ENCODE measurements at regions of chr10 and their contacts with region 1.

Region 1: DNA sequence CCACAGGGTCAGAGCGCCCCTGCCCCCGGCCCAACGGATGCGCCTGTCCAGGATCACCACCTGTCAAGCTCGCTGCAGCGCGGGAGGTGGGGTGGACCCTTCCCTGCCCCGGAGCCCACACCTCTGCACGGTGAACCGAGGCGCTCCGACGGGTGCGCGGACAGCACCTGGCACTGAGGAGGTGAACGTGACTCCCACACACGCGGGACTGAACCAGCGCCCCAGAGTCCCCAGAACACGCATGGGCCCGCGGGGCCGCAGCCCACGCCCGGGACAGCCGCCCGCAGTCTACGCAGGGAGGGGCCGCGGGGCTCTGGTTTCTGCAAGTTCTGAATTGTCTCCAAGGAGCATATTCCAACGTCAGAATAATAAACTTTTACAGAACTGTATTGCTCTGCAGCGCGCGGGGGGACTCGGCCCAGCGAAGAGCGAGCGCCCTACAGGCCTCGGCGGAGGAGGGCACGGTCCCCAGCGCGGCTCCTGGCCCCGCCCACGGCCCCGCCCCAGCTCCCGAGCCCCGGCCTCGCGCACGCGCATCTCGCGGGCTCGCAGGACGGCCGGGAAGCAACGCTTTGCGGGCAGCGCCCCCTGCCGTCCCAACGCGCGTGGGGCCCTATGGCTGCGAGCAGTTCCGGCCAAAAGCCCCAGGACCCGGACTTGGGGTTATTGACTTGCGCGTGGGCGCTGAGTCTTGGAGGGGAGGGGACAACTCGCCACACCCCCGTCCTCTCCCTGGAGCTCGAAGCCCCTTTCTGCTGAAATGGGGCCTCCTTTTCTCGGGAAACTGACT is 29.7 kb downstream of the OAT start:
- DNase-seq: peak; percentile 72
- ATAC-seq: peak; percentile 96
- H3K4me3 ChIP-seq: peak overlapping the region; percentile 22 to 29; a peak in 3 of 4 replicates
- H3K27ac ChIP-seq: peak overlapping the region; percentile 15; the same call in 1 of the 2 replicates
- H3K4me1 ChIP-seq: peaks cover 7 to 10% of the 10 kb centered on the region in 2 experiments
- H3K27me3 ChIP-seq: no peaks in the 10 kb centered on the region
- CTCF ChIP-seq: peak; percentile 96 to 98 (median 96)
- POLR2A ChIP-seq: peak; percentile 65
- RAD21 ChIP-seq: peak; percentile 100

Region 2: DNA sequence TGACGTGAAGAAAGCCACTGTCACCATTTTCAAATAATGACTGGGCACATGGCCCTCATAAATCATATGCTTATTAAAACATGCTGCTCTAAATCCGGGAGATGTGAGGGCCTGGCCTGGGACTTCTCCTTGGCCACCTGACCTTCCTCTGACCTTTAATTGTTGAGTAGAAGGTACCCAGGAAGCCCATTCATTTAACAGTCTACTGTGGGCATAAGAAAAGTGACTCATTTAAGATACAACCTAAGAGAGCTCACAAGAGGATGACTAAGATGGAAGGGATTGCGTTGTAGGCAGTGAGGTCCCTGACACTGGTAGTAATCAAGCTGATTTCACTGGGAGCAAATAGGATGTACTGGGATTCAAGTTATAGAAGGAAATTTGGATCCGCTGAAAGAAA is 926.3 kb before region 1 on chr10:
- CTCF ChIA-PET with region 1: no interaction called
- POLR2A ChIA-PET with region 1: no interaction called
- RAD21 ChIA-PET with region 1: no interaction called
- intact Hi-C with region 1: no loop called
- DNase-seq: no peak
- ATAC-seq: no peak
- H3K4me3 ChIP-seq: no peak overlapping the region
- H3K27ac ChIP-seq: no peak overlapping the region
- H3K4me1 ChIP-seq: no peaks in the 10 kb centered on the region
- H3K27me3 ChIP-seq: no peaks in the 10 kb centered on the region
- CTCF ChIP-seq: no peak
- POLR2A ChIP-seq: no peak
- RAD21 ChIP-seq: no peak

Region 3: DNA sequence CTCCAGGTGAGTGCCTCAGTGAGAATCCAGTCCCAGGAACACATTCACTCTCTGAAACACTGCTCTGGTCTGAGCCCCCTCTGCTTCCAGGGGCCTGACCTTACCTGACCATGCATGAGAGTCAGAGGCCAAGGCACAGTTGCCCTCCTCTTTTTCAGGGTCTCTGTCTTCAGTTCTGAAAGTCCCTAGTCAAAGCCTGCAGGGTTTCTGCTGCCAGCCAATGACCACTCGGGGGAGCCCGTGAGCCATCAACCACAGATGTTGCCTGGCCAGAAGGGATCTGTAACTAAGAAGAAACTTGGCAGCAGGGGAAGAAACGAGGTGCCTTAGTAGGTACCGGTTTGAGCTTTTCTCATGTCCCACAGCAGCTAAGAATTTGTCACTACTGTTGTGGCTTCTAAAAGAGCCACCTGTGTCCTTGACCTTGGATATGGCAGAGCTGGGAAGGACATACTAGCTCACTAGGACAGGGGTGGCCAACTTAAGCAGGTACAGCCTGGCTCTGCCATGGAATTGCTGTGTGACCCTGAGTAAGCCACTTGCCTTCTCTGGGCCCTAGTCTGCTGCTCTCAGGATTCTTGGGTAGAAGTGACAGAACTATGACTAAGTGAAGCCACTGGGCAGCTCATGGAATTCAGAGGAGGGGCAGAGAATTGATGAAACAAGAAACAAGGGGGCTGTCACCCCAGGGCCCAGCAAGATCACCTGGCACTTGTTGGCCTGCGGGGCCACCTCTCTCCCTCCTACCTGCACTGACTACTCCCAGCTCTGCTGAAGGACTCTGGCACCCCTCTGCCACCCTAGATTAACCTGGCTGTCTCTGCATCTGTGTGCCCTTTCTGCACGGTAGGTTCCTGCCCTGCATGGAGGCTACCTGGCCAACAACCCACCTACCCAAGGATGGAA is 806.7 kb before region 1 on chr10:
- CTCF ChIA-PET with region 1: interaction called, 4 read pairs
- POLR2A ChIA-PET with region 1: no interaction called
- RAD21 ChIA-PET with region 1: no interaction called
- intact Hi-C with region 1: loop called (anchors 2 kb)
- DNase-seq: peak; percentile 68
- ATAC-seq: peak; percentile 86
- H3K4me3 ChIP-seq: no peak overlapping the region
- H3K27ac ChIP-seq: no peak overlapping the region
- H3K4me1 ChIP-seq: peaks cover 0 to 3% of the 10 kb centered on the region in 2 experiments; a peak in 2 of 4 replicates
- H3K27me3 ChIP-seq: peaks cover 51% of the 10 kb centered on the region
- CTCF ChIP-seq: peak; percentile 94 to 99 (median 99)
- POLR2A ChIP-seq: no peak
- RAD21 ChIP-seq: peak; percentile 96

Region 4: DNA sequence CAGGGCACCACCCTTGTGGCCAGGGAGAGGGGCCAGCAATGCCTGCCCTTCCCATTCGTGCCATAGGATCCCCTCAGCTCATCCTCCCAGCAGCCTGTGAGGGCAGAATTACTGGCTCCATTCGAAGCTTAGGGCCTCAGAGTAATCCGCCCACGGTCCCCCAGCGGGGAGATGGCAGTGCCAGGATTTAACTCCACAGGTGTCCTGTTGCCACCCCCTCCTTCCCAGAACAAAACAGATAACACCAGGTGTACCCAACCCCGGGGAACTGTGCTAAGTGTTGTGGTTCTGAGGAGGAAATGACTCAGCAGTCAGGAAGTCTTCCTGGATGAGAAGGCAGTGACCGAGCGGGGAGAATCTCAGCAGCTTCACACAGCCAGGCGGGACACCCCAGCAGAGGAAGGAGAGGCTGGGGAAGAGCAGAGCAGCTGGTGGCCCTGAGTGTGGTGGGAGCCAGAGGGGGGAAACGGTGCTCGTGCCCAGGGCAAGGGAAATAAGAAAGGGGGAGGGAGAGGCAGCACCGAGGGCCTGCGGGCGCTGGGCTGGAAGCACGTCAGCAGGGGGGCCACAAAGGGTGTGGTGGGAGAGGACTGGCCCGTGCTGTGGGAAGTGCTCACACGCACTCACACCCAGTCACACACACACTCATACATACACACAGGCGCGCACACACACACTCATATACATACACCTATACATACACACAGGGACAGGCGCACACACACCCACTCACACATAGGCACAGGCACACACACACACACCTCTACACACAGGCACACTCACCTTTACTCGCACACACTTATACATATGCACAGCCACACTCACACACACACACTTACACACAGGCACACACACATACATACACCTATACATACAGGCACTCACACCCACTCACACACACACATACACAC is 235.8 kb before region 1 on chr10:
- CTCF ChIA-PET with region 1: interaction called, 9 read pairs
- POLR2A ChIA-PET with region 1: interaction called, 3 read pairs
- RAD21 ChIA-PET with region 1: interaction called in 1 of 2 experiments, 5 read pairs
- intact Hi-C with region 1: loop called (anchors 5 kb)
- DNase-seq: peak; percentile 100
- ATAC-seq: peak; percentile 80
- H3K4me3 ChIP-seq: peak overlapping the region; percentile 45 to 57
- H3K27ac ChIP-seq: peak overlapping the region; percentile 94
- H3K4me1 ChIP-seq: peaks cover 50 to 66% of the 10 kb centered on the region in 2 experiments
- H3K27me3 ChIP-seq: no peaks in the 10 kb centered on the region
- CTCF ChIP-seq: no peak
- POLR2A ChIP-seq: no peak
- RAD21 ChIP-seq: no peak

Region 5: DNA sequence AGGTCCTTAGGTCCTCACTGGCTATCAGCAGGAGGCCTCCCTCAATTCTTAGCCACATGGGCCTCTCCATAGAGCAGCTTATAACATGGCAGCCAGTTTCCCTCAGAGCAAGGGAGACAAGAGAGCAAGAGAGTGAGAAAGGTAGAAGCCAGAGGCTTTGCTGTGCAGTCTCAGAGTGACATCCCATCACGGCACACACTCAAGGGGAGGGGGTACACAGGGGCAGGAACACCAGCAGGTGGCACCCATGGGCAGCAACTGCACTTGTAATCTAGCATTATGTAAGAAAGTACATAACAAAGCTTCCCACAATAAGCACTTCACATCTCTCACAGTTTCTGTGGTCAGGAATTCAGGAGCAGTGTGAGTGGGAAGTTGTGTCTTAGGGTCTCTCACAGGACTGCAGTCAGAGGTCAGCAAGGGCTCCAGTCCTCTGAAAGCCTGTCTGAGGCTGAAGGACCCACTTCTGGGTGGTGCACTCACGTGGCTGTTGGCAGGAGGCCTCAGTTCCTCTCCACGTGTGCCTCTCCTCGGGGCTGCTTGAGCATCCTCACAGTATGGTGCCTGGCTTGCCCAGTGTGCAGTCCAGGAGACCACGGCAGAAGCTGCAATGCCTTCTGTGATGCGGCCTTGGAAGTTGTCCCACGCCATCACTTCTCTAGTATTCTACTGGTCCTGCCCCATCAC is 129.7 kb before region 1 on chr10:
- CTCF ChIA-PET with region 1: interaction called, 13 read pairs
- POLR2A ChIA-PET with region 1: no interaction called
- RAD21 ChIA-PET with region 1: interaction called, 3 to 4 read pairs
- intact Hi-C with region 1: loop called (anchors 5 kb)
- DNase-seq: peak; percentile 21
- ATAC-seq: peak; percentile 84
- H3K4me3 ChIP-seq: no peak overlapping the region
- H3K27ac ChIP-seq: no peak overlapping the region
- H3K4me1 ChIP-seq: no peaks in the 10 kb centered on the region
- H3K27me3 ChIP-seq: no peaks in the 10 kb centered on the region
- CTCF ChIP-seq: peak; percentile 39 to 59 (median 40); a peak in 5 of 6 replicates
- POLR2A ChIP-seq: no peak
- RAD21 ChIP-seq: peak; percentile 64

Region 6: DNA sequence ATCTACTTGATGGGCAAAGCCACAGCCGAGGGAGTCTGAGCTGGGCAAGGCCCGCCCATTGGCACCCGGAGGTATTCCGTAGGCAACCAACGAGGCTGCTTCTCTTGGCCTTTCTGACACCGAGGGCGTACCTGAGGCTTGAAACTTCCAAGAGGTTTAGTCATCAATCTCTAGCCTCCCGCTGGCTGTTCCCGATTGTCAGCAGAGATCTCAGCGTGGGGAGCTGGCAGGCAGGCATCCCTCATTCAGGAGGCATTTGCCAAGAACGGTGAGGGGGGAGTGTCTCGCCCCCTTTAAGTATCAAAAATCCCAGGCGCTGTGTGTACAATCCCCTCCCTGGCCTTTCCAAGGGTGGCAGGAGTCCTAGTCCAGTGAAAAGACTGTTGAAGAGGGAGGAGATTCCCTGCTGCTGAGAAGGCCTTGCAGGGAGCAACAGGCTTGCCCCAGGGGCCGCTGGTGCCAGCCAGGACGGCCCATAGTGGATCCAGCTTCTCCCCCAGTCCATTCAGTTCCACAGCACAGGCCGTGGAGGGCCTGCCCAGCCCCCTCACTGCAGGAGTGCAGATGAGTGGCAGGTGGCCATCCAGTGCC is 10.0 kb before region 1 on chr10:
- CTCF ChIA-PET with region 1: interaction called, 29 read pairs
- POLR2A ChIA-PET with region 1: interaction called, 3 read pairs
- RAD21 ChIA-PET with region 1: interaction called in 1 of 2 experiments, 7 read pairs
- intact Hi-C with region 1: no loop called
- DNase-seq: peak; percentile 78
- ATAC-seq: peak; percentile 98
- H3K4me3 ChIP-seq: peak overlapping the region; percentile 10 to 36; a peak in 2 of 4 replicates
- H3K27ac ChIP-seq: 0 out of 2 replicates have a peak overlapping the region, but pooled peaks have one; percentile 0
- H3K4me1 ChIP-seq: peaks cover 12 to 18% of the 10 kb centered on the region in 2 experiments
- H3K27me3 ChIP-seq: no peaks in the 10 kb centered on the region
- CTCF ChIP-seq: no peak
- POLR2A ChIP-seq: no peak
- RAD21 ChIP-seq: no peak; the same call in 1 of the 2 replicates

Region 7: GRCh38 chr10:124894569-124895215 is 505.7 kb after region 1 on chr10:
- CTCF ChIA-PET with region 1: no interaction called
- POLR2A ChIA-PET with region 1: no interaction called
- RAD21 ChIA-PET with region 1: no interaction called
- intact Hi-C with region 1: no loop called
- DNase-seq: no peak
- ATAC-seq: no peak
- H3K4me3 ChIP-seq: no peak overlapping the region
- H3K27ac ChIP-seq: no peak overlapping the region
- H3K4me1 ChIP-seq: no peaks in the 10 kb centered on the region; a peak in 1 of 4 replicates
- H3K27me3 ChIP-seq: peaks cover 17% of the 10 kb centered on the region; the same call in 1 of the 2 replicates
- CTCF ChIP-seq: no peak
- POLR2A ChIP-seq: no peak
- RAD21 ChIP-seq: no peak

Measured in HCT116 (cell line).